Psoas muscle (tissue), 8 donors: ENCODE measurements at regions of chr5 and their contacts with region 1.

Region 1: DNA sequence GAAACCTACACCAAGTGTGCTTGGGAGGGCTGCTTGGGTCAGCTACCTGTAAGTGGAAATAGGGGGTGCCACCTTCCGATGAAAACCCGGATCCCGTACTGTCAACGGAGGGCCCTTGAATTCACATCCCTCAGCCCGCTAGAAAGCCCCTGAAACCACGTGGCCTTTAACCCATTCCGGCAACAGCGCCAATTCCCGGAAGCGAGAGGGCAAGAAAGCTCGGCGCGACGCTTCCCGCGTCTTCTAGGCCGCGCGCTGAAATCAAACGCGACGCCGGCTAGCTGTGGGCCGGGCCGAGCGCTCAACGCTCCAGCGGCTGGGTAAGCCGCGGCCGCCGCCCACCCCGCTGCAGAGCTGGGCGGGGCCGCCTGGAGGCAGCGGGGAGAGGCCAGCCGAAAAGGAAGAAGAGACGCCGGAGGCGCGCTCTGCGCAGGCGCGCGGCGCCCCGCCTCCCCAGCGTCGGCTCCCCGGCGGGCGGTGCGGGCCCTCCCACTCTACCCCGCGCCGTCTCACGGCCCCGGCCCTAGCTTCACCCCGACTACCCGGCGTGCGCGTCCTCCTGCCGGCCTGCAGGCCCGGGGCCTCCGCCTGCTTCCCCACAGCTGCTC is at the start of gene KIF2A:
- DNase-seq: peak; percentile 92 to 94
- ATAC-seq: peak; percentile 99
- H3K4me3 ChIP-seq: peak within 1 kb of the TSS; percentile 93
- H3K27ac ChIP-seq: peak within 1 kb of the TSS; percentile 82
- H3K4me1 ChIP-seq: no peaks in the 10 kb centered on the region
- H3K27me3 ChIP-seq: no peaks in the 10 kb centered on the region
- CTCF ChIP-seq: peak; percentile 21
- total RNA-seq, gene KIF2A: 7.5 to 10.6 (median 8.9) TPM

Region 2: GRCh38 chr5:61881821-61882487 is 423.9 kb before region 1 on chr5:
- intact Hi-C with region 1: no loop called
- DNase-seq: no peak
- ATAC-seq: no peak
- H3K4me3 ChIP-seq: no peak overlapping the region
- H3K27ac ChIP-seq: no peak overlapping the region
- H3K4me1 ChIP-seq: no peaks in the 10 kb centered on the region
- H3K27me3 ChIP-seq: no peaks in the 10 kb centered on the region
- CTCF ChIP-seq: no peak

Region 3: DNA sequence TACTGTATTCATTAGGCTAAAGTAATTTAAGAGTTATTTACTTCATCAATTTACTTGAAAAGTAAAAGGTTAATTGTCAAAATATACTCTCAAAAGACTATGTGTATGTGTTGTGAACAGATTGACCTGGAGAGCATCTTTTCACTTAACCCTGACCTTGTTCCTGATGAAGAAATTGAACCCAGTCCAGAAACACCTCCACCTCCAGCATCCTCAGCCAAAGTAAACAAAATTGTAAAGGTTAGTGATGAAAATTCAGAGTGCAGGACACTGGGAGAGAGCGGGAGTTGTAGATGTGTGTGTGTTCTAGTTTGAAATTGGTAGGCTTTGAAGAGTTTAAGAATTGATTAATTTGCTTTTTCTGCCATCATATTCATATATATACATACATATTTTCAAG is 42.1 kb after region 1 on chr5:
- intact Hi-C with region 1: loop called in 1 of 2 experiments (anchors 5 kb)
- DNase-seq: no peak
- ATAC-seq: no peak
- H3K4me3 ChIP-seq: no peak overlapping the region
- H3K27ac ChIP-seq: no peak overlapping the region
- H3K4me1 ChIP-seq: no peaks in the 10 kb centered on the region
- H3K27me3 ChIP-seq: no peaks in the 10 kb centered on the region
- CTCF ChIP-seq: no peak

Region 4: DNA sequence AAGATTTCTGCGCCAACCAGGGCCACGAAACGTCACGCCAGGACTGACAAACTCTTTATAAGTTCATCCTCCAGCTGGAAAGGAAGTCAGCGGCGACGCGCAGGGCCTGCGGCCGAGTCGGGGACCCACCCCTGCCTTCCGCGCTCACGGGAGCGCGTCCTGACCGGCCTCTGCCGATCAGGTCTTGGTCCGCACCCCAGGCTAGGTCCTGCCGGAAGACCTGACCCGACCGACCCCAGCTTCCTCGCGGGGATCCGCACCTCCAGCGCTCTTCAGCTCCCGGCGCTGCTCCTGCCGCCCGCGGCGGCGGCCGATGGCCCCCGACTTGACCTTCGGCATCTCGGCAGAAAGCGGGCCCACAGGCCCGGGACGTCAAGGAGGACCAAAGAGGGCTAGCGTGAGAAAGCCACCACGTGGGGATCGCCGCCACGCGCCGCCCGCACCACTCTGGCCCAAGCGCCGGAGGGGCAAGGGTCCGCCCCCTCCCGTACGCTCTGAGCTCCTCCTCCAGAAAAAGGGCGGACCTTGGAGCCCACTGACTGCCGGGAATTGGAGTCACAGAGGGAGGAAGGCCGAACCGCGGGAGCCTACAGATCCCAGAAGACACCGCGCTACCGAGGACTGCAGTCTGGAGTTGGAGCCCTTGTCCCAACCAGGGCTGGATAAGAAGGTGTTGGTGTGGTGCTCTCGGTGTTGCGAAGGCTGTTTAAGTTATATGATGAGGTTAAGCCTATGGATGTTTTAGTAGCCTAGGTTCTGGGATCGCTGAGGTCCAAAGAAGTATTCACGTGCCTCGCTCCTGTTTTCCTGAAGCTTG is 97.8 kb after region 1 on chr5 and contains the start of gene DIMT1:
- intact Hi-C with region 1: loop called in 1 of 2 experiments (anchors 10 kb)
- DNase-seq: peak; percentile 94 to 97
- ATAC-seq: peak; percentile 99 to 100 (median 100)
- H3K4me3 ChIP-seq: peak within 1 kb of the TSS; percentile 94
- H3K27ac ChIP-seq: peak within 1 kb of the TSS; percentile 96
- H3K4me1 ChIP-seq: peaks cover 9% of the 10 kb centered on the region
- H3K27me3 ChIP-seq: no peaks in the 10 kb centered on the region
- CTCF ChIP-seq: no peak
- total RNA-seq, gene DIMT1: 8.5 to 28.0 (median 21.8) TPM